PC-9 (cell line): ENCODE measurements at regions of chr3 and their contacts with region 1.

Region 1: DNA sequence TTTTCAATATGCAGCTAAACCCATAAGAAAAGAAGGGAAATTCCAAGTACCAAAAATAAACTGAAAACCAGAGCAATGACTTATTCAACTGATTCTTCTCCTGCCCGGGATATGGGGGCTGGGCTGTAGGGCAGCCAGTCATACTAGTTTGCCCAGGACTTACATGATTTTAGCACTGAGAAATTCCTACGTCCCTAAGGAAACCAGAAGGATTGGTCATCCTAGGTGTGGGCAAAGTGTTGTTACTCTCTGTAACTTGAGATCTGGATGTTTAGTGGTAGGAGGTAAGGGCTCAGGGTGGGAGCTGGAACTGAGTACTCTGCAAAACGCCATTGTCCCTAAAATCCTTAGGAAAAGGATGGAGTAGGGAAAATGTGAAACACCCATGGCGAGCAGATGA is 1.2 kb upstream of the DAZL start:
- DNase-seq: peak; percentile 67 to 77
- H3K4me3 ChIP-seq: no peak overlapping the region
- H3K27ac ChIP-seq: peak overlapping the region; percentile 12; the same call in 1 of the 2 replicates
- H3K4me1 ChIP-seq: peaks cover 33% of the 10 kb centered on the region
- H3K27me3 ChIP-seq: no peaks in the 10 kb centered on the region
- CTCF ChIP-seq: no peak

Region 2: GRCh38 chr3:16728781-16729745 is 122.7 kb after region 1 on chr3:
- CTCF ChIA-PET with region 1: no interaction called
- POLR2A ChIA-PET with region 1: no interaction called
- intact Hi-C with region 1: loop called (anchors 1 kb)
- DNase-seq: peak; percentile 45 to 76
- H3K4me3 ChIP-seq: peak overlapping the region; percentile 36
- H3K27ac ChIP-seq: peak overlapping the region; percentile 95
- H3K4me1 ChIP-seq: peaks cover 38% of the 10 kb centered on the region
- H3K27me3 ChIP-seq: no peaks in the 10 kb centered on the region
- CTCF ChIP-seq: no peak

Region 3: GRCh38 chr3:16801698-16802097 is 195.3 kb after region 1 on chr3:
- CTCF ChIA-PET with region 1: no interaction called
- POLR2A ChIA-PET with region 1: no interaction called
- intact Hi-C with region 1: loop called (anchors 1 kb)
- DNase-seq: no peak
- H3K4me3 ChIP-seq: no peak overlapping the region
- H3K27ac ChIP-seq: no peak overlapping the region
- H3K4me1 ChIP-seq: peaks cover 8% of the 10 kb centered on the region
- H3K27me3 ChIP-seq: no peaks in the 10 kb centered on the region
- CTCF ChIP-seq: no peak

Region 4: DNA sequence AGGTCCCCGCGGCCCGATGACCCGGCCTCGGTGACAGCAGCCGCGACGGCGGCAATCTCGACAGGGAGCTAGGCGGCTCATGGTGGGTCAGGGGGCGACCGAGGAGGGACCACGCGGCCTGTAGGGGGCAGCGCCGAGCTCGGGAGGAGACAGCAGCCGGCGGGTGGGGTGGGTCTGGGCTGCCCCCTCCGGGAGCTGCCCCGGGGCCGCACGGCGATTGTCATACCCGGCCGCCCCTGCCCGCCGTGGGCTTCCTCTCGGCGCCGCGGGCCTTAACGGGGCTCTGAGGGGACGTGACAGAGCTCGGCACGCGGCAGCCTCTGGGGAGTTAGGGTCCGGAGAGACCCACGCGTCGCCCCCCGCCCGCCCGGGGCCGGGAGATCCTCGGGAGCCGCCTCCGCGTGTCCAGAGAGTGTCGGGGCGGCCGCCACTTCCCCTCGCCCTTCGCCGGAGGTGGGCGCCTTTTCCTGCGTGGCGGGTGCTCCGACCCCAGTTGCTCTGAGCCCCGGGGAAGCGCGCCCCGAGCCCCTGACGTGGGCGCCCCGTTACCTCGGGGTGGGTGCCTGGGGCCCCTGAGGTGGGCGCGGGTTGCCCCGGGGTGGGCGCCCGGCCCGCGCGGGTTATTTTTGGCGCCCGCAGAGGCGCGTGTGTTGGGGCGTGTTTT is 277.8 kb after region 1 on chr3:
- CTCF ChIA-PET with region 1: no interaction called
- POLR2A ChIA-PET with region 1: no interaction called
- intact Hi-C with region 1: loop called (anchors 2 kb)
- DNase-seq: peak in 1 of 2 experiments; percentile 19
- H3K4me3 ChIP-seq: peak overlapping the region; percentile 98
- H3K27ac ChIP-seq: no peak overlapping the region
- H3K4me1 ChIP-seq: peaks cover 27% of the 10 kb centered on the region
- H3K27me3 ChIP-seq: no peaks in the 10 kb centered on the region
- CTCF ChIP-seq: peak; percentile 57; the same call in 1 of the 2 replicates

Region 5: DNA sequence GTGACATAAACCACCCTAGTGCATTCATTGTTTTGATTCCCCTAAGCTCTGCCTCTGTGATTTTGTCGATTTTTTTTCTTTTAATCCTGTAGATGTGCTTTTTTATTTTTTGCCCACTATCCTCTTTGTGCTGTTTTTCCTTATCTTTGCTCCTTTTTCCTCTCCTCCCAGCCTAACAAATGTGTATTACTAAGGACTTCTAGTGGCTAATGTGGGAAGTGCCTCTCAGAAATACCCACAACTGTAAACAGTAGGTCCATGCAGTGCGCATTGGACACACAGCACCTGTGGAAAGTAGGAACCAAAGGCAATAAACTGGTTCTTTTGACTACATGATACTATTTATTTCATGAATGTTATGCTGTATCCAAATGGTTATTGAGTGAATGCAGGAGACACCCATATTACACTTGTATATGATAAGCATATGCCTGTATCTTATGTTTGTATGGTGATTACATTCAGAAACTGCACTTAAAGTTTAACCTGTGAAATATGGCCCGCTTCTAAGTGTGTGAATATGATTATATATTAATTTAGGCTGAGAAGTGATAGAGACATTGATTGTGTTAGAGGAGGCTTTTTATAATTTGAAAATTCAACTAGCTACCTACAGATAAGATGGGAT is 426.1 kb after region 1 on chr3:
- CTCF ChIA-PET with region 1: interaction called, 3 read pairs
- POLR2A ChIA-PET with region 1: no interaction called
- intact Hi-C with region 1: loop called (anchors 1 kb)
- DNase-seq: no peak
- H3K4me3 ChIP-seq: no peak overlapping the region
- H3K27ac ChIP-seq: no peak overlapping the region
- H3K4me1 ChIP-seq: peaks cover 6% of the 10 kb centered on the region
- H3K27me3 ChIP-seq: no peaks in the 10 kb centered on the region
- CTCF ChIP-seq: peak; percentile 71

Region 6: DNA sequence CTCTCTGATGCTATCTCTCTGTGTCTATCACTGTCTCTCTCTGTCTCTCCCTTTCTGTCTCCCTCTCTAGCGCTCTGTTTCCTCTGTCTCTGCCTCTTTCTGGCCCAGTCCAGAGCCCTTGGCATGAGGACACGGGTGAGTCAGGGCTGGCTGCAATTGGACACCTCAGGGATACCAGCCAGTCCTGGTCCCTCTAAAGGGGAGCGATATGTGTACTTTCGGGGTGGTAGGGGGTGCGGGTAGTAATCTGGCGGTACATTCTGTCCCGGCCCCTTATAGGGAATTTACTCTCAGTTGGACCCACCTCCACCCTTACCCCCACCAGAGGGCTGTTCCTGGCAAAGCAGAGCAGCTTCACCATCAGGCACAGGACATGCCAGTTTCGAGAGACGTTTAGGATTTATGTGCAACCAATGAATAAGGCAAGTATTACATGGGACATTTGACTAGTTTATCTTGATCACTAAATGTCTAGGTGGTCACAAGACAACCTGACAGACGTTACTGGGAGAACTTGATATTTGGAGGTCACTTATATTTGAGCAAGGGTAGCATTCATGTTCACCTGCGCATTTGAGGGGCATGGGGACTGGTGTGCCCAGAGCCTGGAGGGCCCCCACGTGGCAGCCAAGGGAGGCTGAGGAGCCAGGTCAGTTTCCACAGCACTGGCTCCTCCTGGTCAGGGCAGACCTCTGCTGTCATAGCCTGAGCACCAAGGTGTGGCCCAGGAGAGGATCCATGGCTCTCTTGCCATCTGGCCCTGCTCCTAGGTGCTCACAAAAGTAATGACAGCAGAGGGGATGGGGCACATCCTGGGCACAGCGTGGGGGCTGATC is 534.5 kb after region 1 on chr3:
- CTCF ChIA-PET with region 1: no interaction called
- POLR2A ChIA-PET with region 1: no interaction called
- intact Hi-C with region 1: loop called (anchors 2 kb)
- DNase-seq: no peak
- H3K4me3 ChIP-seq: no peak overlapping the region
- H3K27ac ChIP-seq: no peak overlapping the region
- H3K4me1 ChIP-seq: no peaks in the 10 kb centered on the region
- H3K27me3 ChIP-seq: no peaks in the 10 kb centered on the region
- CTCF ChIP-seq: no peak